ENCODE measurements at regions of chr6 and their contacts with region 1.

Region 1: GRCh38 chr6:93721385-93722048 is 302.2 kb upstream of the EPHA7 start:
- DNase-seq: no peak
- H3K4me3 ChIP-seq: no peak overlapping the region
- H3K27ac ChIP-seq: no peak overlapping the region
- H3K4me1 ChIP-seq: no peaks in the 10 kb centered on the region
- H3K27me3 ChIP-seq: no peaks in the 10 kb centered on the region
- CTCF ChIP-seq: peak; percentile 38

Region 2: GRCh38 chr6:93581371-93581770 is 140.1 kb before region 1 on chr6:
- intact Hi-C with region 1: no loop called
- DNase-seq: no peak
- H3K4me3 ChIP-seq: no peak overlapping the region
- H3K27ac ChIP-seq: no peak overlapping the region
- H3K4me1 ChIP-seq: no peaks in the 10 kb centered on the region
- H3K27me3 ChIP-seq: no peaks in the 10 kb centered on the region
- CTCF ChIP-seq: no peak

Region 3: GRCh38 chr6:93663111-93663510 is 58.4 kb before region 1 on chr6:
- intact Hi-C with region 1: no loop called
- DNase-seq: no peak
- H3K4me3 ChIP-seq: no peak overlapping the region
- H3K27ac ChIP-seq: no peak overlapping the region
- H3K4me1 ChIP-seq: no peaks in the 10 kb centered on the region
- H3K27me3 ChIP-seq: no peaks in the 10 kb centered on the region
- CTCF ChIP-seq: no peak

Region 4: GRCh38 chr6:94052754-94053153 is 331.2 kb after region 1 on chr6:
- intact Hi-C with region 1: loop called (anchors 10 kb)
- DNase-seq: no peak
- H3K4me3 ChIP-seq: no peak overlapping the region
- H3K27ac ChIP-seq: no peak overlapping the region
- H3K4me1 ChIP-seq: no peaks in the 10 kb centered on the region
- H3K27me3 ChIP-seq: no peaks in the 10 kb centered on the region
- CTCF ChIP-seq: no peak

Region 5: DNA sequence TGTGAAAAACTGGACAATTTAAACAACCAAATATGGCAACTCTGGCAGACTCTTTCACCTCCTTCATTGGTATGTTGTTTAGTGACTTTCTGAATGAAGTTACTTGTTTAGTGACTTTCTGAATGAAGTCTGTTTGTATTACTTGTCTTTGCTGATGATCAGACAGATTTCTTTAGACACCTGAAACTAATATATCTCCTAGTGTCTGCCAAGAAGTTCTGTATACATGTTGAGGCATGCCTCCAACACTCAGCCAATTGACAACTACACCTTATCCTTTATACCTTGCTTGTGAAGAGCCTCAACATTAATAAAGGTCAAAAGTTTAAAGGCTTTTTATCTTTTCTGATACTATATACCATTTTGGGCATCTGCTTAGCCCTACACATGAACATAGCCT is 423.3 kb after region 1 on chr6:
- intact Hi-C with region 1: no loop called
- DNase-seq: no peak
- H3K4me3 ChIP-seq: no peak overlapping the region
- H3K27ac ChIP-seq: no peak overlapping the region
- H3K4me1 ChIP-seq: no peaks in the 10 kb centered on the region
- H3K27me3 ChIP-seq: no peaks in the 10 kb centered on the region
- CTCF ChIP-seq: no peak

Region 6: GRCh38 chr6:94254689-94255088 is 533.2 kb after region 1 on chr6:
- intact Hi-C with region 1: loop called (anchors 10 kb)
- DNase-seq: no peak
- H3K4me3 ChIP-seq: no peak overlapping the region
- H3K27ac ChIP-seq: no peak overlapping the region
- H3K4me1 ChIP-seq: no peaks in the 10 kb centered on the region
- H3K27me3 ChIP-seq: no peaks in the 10 kb centered on the region
- CTCF ChIP-seq: no peak